ENCODE measurements at regions of chr17 and their contacts with region 1.

Region 1: GRCh38 chr17:35969558-35970380 is 11.5 kb downstream of the CCL16 start:
- DNase-seq: peak; percentile 45
- ATAC-seq: peak; percentile 92
- H3K4me3 ChIP-seq: no peak overlapping the region
- H3K27ac ChIP-seq: no peak overlapping the region
- H3K4me1 ChIP-seq: no peaks in the 10 kb centered on the region
- H3K27me3 ChIP-seq: no peaks in the 10 kb centered on the region
- CTCF ChIP-seq: peak; percentile 77 to 92 (median 86); a peak in 5 of 6 replicates
- EP300 ChIP-seq: no peak
- POLR2A ChIP-seq: no peak
- RAD21 ChIP-seq: peak; percentile 95

Region 2: DNA sequence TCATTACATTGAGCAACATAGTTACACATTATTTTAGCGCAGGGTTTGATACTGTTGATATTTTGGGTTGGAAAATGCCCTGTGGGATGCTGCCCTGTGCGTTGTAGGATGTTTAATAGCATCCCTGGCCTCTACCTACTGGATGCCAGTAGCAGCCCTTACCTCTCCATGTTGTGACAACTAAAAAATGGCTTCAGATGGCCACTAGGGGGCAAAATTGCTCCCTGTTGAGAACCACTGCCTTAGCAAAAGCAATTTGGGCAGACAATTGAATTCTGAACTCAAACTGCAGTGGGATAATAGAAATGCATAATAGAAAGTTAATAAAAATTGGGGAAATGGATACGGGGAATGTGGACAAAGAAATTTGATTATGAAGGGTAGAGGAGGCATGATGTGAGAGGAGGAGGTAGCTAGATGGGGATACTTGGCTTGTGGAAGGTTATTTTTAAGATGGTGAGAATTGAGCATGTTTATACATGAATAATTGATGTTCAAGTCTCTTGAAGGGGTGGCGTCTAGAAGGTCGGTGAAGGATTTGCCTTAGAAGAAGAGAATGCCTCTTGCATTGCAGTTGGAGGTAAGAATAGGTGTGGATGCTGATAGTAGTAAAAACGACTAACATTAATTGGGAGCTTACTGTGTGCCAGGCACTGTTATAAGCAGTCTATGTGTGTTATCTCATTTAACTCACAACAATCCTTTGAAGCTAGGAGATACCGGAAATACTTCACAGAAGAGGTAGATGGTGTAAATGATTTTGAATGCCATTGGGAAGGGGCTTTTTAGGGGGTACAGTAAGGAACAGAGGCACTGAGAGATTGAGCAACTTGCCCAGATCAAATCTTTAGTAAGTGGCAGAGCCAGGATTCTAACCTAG is 120.1 kb before region 1 on chr17:
- CTCF ChIA-PET with region 1: interaction called, 22 read pairs
- POLR2A ChIA-PET with region 1: no interaction called
- RAD21 ChIA-PET with region 1: interaction called, 19 read pairs
- SMC1A ChIA-PET with region 1: interaction called, 7 read pairs
- in situ Hi-C with region 1: no loop called
- intact Hi-C with region 1: no loop called
- DNase-seq: peak; percentile 20
- ATAC-seq: peak; percentile 95
- H3K4me3 ChIP-seq: no peak overlapping the region
- H3K27ac ChIP-seq: no peak overlapping the region
- H3K4me1 ChIP-seq: no peaks in the 10 kb centered on the region
- H3K27me3 ChIP-seq: no peaks in the 10 kb centered on the region
- CTCF ChIP-seq: peak; percentile 73 to 79 (median 75)
- EP300 ChIP-seq: no peak
- POLR2A ChIP-seq: no peak
- RAD21 ChIP-seq: peak; percentile 91

Region 3: GRCh38 chr17:35953720-35954119 is 16.0 kb before region 1 on chr17:
- CTCF ChIA-PET with region 1: interaction called, 30 read pairs
- POLR2A ChIA-PET with region 1: interaction called, 3 read pairs
- RAD21 ChIA-PET with region 1: interaction called, 15 read pairs
- SMC1A ChIA-PET with region 1: interaction called, 18 read pairs
- in situ Hi-C with region 1: no loop called
- intact Hi-C with region 1: no loop called
- DNase-seq: no peak
- ATAC-seq: no peak
- H3K4me3 ChIP-seq: no peak overlapping the region
- H3K27ac ChIP-seq: no peak overlapping the region
- H3K4me1 ChIP-seq: no peaks in the 10 kb centered on the region
- H3K27me3 ChIP-seq: no peaks in the 10 kb centered on the region; a peak in 1 of 4 replicates
- CTCF ChIP-seq: no peak
- EP300 ChIP-seq: no peak
- POLR2A ChIP-seq: no peak
- RAD21 ChIP-seq: no peak

Region 4: GRCh38 chr17:35991075-35991474 is 21.3 kb after region 1 on chr17:
- CTCF ChIA-PET with region 1: interaction called, 11 read pairs
- POLR2A ChIA-PET with region 1: interaction called, 5 read pairs
- RAD21 ChIA-PET with region 1: interaction called, 6 read pairs
- SMC1A ChIA-PET with region 1: interaction called, 5 read pairs
- in situ Hi-C with region 1: no loop called
- intact Hi-C with region 1: no loop called
- DNase-seq: no peak
- ATAC-seq: no peak
- H3K4me3 ChIP-seq: no peak overlapping the region
- H3K27ac ChIP-seq: no peak overlapping the region
- H3K4me1 ChIP-seq: no peaks in the 10 kb centered on the region
- H3K27me3 ChIP-seq: no peaks in the 10 kb centered on the region
- CTCF ChIP-seq: no peak
- EP300 ChIP-seq: no peak
- POLR2A ChIP-seq: no peak
- RAD21 ChIP-seq: no peak

Region 5: DNA sequence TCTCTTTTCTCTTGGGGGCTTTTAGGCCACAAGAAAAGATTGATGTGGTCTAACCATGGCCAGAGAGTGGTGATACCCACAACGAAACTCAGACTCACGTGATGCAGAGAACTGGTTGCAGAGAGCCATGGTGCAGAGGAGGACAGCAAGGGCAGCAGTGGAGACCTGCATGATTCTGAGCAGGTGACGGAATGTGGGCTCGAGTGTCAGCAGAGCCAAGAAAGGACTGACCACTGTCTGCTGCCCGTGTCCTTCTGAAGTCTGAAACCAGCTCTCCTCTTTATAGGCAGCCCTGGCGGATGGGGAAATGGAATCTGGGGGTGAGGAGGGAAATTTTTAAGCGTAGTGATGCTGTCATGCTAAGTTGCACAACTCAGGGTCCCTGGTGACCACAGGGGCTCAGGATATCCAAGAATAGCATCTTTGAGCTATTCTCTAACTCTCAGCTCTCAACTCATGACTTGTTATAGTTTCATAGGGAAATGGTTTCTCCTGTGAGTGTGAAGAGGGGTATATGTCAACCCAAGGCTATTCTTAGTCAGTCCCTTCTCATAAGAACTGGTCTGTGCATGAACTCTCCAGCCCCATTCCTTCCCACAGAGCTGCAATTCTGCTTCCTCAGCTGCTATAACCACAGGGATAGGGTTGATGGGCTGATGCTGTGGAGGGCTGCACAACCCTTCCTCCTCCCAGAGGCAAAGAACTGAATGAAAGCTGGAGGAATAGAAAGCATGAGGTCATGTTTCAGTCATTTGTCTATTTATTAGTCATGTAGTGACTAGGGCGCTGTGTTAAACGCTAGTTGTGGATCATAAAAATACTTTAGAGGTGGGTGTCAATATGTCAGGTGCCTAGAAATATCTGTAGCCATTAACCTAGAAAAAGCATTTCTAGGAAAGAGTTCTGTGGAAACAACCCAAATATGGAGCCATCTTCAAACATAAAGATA is 120.4 kb after region 1 on chr17 and contains the start of gene CCL3:
- CTCF ChIA-PET with region 1: interaction called, 13 read pairs
- POLR2A ChIA-PET with region 1: interaction called, 4 read pairs
- RAD21 ChIA-PET with region 1: interaction called, 17 read pairs
- SMC1A ChIA-PET with region 1: interaction called, 15 read pairs
- in situ Hi-C with region 1: no loop called
- intact Hi-C with region 1: no loop called
- DNase-seq: peak; percentile 99
- ATAC-seq: peak; percentile 70
- H3K4me3 ChIP-seq: peak within 1 kb of the TSS; percentile 64
- H3K27ac ChIP-seq: peak within 1 kb of the TSS; percentile 87
- H3K4me1 ChIP-seq: peaks cover 50% of the 10 kb centered on the region
- H3K27me3 ChIP-seq: no peaks in the 10 kb centered on the region
- CTCF ChIP-seq: no peak
- EP300 ChIP-seq: peak; percentile 91 to 96
- POLR2A ChIP-seq: peak; percentile 92
- RAD21 ChIP-seq: no peak
- polyA plus RNA-seq, gene CCL3: 240 to 318 TPM

Region 6: DNA sequence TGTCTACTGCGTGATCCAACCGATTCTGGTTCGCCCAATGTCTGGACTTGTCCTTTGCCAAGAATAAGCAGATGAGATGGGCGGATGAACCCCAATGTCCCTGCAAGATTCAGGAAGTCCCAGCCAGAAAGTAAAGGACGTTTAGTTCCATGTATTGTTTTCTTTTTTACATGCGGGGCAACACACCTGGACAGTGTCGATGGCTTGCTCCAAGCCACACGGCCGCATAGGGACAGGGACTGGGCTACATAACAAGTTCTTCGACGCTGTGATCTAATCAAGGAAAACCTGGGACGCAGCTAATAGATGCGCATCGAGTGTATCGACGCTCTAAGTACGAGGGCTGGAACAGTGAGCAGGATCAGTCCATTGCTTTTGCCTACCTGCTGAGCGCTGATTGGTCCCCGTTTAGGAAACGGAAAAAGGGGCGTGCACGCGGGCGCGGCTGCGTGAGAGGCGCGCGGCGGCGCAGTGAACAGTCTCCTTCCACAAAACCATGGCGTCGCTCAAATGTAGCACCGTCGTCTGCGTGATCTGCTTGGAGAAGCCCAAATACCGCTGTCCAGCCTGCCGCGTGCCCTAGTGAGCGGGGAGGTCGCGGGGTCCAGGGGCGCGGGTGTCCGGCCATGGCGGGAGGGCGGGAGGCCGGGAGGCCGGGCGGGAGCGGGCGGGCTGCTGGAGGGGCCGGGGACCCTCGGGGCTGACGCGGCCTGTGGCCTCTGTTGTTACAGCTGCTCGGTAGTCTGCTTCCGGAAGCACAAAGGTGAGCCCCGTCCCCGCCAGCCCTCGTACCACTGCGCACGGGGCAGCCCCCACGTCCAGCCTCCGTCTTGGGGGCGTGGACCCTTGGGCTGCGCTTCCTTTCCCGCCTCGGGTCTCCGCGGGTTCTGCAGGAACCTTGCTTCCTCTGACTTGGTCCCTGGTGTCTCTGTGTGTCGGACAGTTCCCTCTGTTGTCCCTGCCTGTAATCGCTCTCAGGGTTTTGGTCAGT is 516.7 kb after region 1 on chr17 and contains the start of gene ZNHIT3:
- CTCF ChIA-PET with region 1: interaction called, 27 read pairs
- POLR2A ChIA-PET with region 1: interaction called, 3 read pairs
- RAD21 ChIA-PET with region 1: interaction called, 19 read pairs
- SMC1A ChIA-PET with region 1: interaction called, 12 read pairs
- in situ Hi-C with region 1: loop called (anchors 5 kb)
- intact Hi-C with region 1: loop called (anchors 1 kb)
- DNase-seq: peak; percentile 80
- ATAC-seq: peak; percentile 97
- H3K4me3 ChIP-seq: peak within 1 kb of the TSS; percentile 90
- H3K27ac ChIP-seq: peak within 1 kb of the TSS; percentile 71
- H3K4me1 ChIP-seq: peaks cover 9% of the 10 kb centered on the region
- H3K27me3 ChIP-seq: peaks cover 0 to 4% of the 10 kb centered on the region in 2 experiments; a peak in 1 of 4 replicates
- CTCF ChIP-seq: no peak
- EP300 ChIP-seq: no peak
- POLR2A ChIP-seq: peak; percentile 91
- RAD21 ChIP-seq: no peak
- polyA plus RNA-seq, gene ZNHIT3: 110 to 128 TPM